ENCODE measurements at regions of chr2 and their contacts with region 1.

Region 1: DNA sequence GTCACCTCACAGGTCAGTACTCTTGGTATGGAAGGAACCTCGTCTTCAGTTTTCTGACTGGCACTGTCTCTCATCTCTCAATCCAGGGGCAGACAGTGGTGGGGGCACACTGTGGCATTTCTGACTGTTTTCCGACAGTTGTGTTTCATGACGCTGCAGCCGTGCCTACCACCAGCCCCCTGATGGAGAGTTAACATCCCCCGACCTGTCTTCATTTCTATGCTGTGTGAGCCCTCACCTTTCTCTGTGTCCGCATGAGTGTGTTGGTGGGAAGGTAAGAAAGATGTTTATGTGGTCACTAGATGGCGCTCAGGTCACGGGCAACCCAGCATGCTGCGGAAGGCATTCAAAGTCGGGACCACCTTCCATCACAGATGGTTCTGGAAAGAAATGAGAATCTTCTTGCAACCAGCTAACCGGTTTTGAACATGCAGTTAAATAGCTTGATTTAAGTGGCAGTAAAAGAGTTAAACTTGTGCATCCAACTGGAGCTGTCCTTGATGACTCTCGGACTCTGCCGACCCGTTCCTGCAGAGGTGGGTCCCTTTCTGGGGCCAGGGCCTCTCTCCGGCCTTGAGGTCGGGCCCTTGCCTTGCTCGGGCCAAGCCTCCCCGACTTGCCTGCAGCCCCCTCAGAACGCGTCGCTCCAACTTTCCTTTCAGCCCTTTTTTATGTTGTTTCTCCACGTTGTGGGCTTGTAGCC is 92.4 kb downstream of the DYSF start:
- DNase-seq: peak; percentile 58
- H3K4me3 Mint-ChIP-seq: no peak overlapping the region
- H3K27ac Mint-ChIP-seq: no peak overlapping the region
- H3K4me1 Mint-ChIP-seq: peaks cover 12% of the 10 kb centered on the region
- H3K27me3 Mint-ChIP-seq: peaks cover 35% of the 10 kb centered on the region

Region 2: GRCh38 chr2:71637168-71637567 is 91.4 kb after region 1 on chr2:
- CTCF ChIA-PET with region 1: no interaction called
- DNase-seq: no peak
- H3K4me3 Mint-ChIP-seq: no peak overlapping the region
- H3K27ac Mint-ChIP-seq: no peak overlapping the region
- H3K4me1 Mint-ChIP-seq: no peaks in the 10 kb centered on the region
- H3K27me3 Mint-ChIP-seq: peaks cover 5% of the 10 kb centered on the region

Region 3: GRCh38 chr2:71736091-71736861 is 190.6 kb after region 1 on chr2:
- CTCF ChIA-PET with region 1: no interaction called
- DNase-seq: no peak
- H3K4me3 Mint-ChIP-seq: no peak overlapping the region
- H3K27ac Mint-ChIP-seq: no peak overlapping the region
- H3K4me1 Mint-ChIP-seq: no peaks in the 10 kb centered on the region
- H3K27me3 Mint-ChIP-seq: no peaks in the 10 kb centered on the region

Region 4: DNA sequence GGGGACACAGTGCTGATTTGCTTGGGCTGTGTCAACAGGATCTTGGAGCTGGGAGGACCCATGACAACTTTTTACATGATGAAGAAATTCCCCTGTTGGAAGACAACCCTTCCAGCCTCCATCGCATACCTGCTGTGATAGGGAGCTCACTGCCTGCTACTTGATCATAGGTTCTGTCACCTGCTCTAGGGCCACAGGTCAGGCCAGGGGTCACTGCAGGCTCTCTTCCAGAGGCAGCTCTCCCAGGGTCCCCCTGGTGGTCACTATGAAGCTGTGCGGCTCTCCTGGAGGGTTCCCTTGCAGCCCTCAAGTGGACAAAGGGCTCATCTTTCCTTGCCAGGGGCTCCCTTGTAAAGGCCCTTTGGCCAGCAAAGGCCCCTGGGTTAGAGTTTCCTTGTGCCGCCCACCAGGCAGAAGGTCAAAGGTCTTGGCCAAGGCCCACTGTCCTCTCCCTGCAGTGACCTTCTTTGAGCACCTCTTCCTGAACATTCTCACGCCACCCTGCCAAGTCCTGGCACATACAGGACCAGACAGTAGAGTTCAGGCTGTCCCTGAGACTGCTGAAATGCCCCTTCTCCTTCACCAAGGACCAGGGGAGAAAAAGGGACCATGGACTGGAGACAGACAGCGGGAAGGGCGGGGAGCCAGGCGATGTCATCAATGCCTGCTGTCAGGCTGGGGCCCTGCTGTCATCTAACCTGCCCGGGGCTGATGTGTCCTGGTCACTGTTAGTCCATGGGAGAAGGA is 252.7 kb after region 1 on chr2:
- CTCF ChIA-PET with region 1: interaction called, 20 read pairs
- DNase-seq: peak; percentile 38
- H3K4me3 Mint-ChIP-seq: no peak overlapping the region
- H3K27ac Mint-ChIP-seq: no peak overlapping the region
- H3K4me1 Mint-ChIP-seq: no peaks in the 10 kb centered on the region
- H3K27me3 Mint-ChIP-seq: no peaks in the 10 kb centered on the region